ENCODE measurements at regions of chr7 and their contacts with region 1.

Region 1: DNA sequence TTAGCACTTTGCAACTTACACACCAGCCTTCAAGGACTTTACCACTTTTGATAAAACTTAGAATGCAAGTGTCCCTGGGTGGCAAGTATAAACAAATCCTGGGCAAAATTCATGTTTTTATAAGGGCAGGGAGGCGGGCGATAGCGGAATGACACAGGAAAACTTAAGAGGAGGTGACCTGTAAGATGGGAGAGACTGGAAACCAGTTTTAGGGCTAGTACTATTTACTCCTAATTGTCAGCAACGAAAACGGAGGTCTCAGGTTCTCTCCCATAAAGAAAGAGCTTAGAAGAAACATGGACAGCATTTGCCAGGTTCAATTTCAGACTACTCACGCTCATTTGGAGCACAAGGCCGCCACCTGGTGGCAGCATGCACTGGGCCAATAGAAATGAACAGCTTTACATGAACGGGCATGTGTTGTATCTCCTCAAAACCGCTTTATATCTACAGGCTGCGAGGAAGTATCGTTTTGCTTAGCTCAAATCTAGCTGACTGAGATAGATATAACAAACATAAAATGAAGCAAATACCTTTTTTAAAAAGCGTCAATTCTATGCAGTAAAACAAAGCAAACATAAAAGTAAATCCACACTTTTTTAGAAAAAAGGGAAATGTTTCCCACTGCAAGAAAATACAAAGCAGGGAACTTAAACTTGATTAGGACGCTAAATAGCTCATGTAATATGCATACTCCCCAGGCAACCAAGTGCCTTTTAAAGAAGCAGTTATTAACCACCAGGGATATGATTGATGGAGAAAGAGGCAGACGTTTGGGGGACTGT is 37.6 kb upstream of the SVOPL start:
- DNase-seq: peak; percentile 49
- H3K4me3 ChIP-seq: no peak overlapping the region
- CTCF ChIP-seq: peak; percentile 91

Region 2: DNA sequence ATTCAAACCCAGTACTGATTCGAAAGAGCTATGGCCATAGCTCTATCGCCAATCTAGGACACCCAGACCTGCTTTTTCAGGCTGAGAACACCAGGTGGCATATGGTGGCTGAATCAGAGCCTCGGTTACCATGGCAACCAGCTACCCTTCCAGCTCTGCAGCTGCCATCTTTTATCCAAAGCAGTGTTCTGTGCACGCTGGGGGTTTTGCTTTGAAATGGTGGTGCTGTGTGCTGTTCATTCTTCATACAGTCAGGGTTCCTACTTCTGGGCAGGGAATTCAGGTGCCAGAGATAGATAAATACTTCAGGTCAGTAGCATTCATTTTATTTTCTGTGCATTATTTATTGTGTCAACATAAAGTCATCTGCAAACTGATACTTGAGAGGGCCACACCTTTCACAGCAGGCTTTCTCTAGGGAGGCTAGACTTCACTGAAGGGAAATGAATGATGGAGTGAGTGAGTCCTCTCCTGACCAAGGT is 577.1 kb before region 1 on chr7:
- CTCF ChIA-PET with region 1: interaction called, 77 read pairs
- POLR2A ChIA-PET with region 1: no interaction called
- DNase-seq: peak; percentile 4
- H3K4me3 ChIP-seq: no peak overlapping the region
- CTCF ChIP-seq: peak; percentile 45

Region 3: DNA sequence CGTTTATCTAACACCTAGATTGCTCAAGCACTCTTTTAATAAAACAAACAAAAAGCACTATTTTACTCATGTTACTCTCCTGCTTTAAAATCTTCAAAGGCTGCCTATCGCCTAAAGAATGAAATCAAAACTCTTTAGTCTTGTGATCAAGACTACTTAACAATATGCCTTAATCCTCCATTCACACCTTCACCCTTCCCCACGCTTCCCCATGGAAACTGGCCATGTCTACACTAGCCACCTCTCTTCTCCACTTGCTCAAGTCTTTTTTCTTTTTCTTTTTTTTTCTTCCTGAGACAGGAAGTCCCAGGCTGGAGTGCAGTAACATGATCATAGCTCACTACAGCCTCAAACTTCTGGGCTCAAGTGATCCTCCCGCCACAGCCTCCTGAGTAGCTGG is 11.2 kb after region 1 on chr7:
- CTCF ChIA-PET with region 1: interaction called, 12 read pairs
- POLR2A ChIA-PET with region 1: no interaction called
- DNase-seq: no peak
- H3K4me3 ChIP-seq: no peak overlapping the region
- CTCF ChIP-seq: no peak

Region 4: DNA sequence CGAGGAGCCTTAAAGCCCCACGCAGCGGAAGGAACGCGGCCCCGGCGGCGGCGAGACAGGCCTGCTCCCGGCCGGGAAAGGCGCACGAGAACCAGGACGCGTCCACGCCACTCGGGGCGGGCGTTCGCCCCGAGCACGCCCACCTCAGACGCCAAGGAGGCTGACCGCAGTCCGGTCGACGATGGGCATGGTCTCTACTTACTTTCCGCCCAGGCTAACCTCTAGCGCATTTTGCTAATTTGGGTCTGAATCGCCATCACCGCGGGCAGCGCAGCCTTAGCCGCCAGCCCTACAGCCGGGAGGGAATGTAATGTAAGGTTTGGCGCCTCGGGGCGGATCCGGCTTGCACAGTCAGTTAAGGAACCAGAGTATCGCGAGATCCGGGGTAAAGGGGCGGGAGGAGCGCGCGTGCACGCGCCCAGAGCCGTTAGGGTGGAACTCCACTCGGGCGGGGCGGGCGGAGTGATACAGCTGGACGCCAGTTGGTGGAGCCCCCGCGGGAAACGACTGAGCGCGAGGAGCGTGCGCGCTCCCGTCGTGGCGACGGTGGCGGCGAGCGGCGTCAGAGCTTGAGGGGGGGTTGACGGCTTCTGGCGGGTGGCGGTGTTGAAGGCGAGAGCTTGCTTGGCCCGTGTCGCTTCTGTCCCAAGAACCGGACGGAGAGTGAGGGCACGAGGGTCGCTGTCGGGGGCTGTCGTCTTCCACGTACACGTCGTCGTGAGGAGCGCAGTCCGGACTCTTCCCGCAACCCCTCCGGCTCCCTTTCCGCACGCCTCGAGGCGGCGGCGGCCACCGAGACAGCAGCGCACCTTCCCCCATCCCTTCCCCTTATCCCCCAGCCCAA is 620.8 kb after region 1 on chr7 and contains the start of gene LUC7L2:
- CTCF ChIA-PET with region 1: no interaction called
- POLR2A ChIA-PET with region 1: no interaction called
- DNase-seq: peak; percentile 89
- H3K4me3 ChIP-seq: peak within 1 kb of the TSS; percentile 100
- CTCF ChIP-seq: no peak